Calu3 (cell line): ENCODE measurements at regions of chr19 and their contacts with region 1.

Region 1: DNA sequence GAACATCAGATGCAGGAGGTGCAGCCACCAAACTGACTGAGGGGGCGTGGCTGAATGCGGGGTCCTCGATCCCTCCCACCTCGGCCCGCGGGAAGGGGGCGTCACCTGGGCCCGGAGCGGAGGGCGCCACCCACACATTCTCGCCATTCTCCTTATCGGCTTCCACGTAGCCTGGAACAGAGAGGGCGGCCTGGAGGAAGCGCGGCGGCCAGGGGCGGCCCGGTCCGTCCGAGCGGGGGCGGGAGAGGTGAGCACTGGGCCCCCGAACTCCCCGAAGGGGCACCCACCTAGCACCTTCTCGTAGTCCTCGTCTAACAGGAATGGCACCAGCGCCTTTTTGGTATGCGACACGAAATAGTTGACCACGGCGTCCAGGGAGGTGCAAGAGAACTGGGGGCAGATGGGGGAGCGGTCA is 11.8 kb downstream of the STAP2 start:
- DNase-seq: no peak
- H3K4me3 Mint-ChIP-seq: no peak overlapping the region
- H3K27ac Mint-ChIP-seq: no peak overlapping the region
- H3K4me1 Mint-ChIP-seq: no peaks in the 10 kb centered on the region
- H3K27me3 Mint-ChIP-seq: no peaks in the 10 kb centered on the region
- CTCF ChIP-seq: no peak

Region 2: GRCh38 chr19:4342615-4343369 is 15.9 kb after region 1 on chr19:
- CTCF ChIA-PET with region 1: interaction called, 12 read pairs
- intact Hi-C with region 1: no loop called
- DNase-seq: peak; percentile 89
- H3K4me3 Mint-ChIP-seq: peak overlapping the region; percentile 87
- H3K27ac Mint-ChIP-seq: peak overlapping the region; percentile 96
- H3K4me1 Mint-ChIP-seq: peaks cover 13% of the 10 kb centered on the region
- H3K27me3 Mint-ChIP-seq: no peaks in the 10 kb centered on the region
- CTCF ChIP-seq: no peak